Dorsolateral prefrontal cortex (tissue), 120 donors: ENCODE measurements at regions of chr13 and their contacts with region 1.

Region 1: GRCh38 chr13:30673669-30674521 is 56.2 kb downstream of the USPL1 start:
- DNase-seq: peak; percentile 74 to 90 (median 86)
- H3K4me3 ChIP-seq: peak overlapping the region; percentile 33 to 77 (median 61)
- H3K27ac ChIP-seq: peak overlapping the region; percentile 27 to 91 (median 83)
- H3K27me3 ChIP-seq: no peaks in the 10 kb centered on the region
- CTCF ChIP-seq: peak; percentile 32 to 94 (median 76)

Region 2: DNA sequence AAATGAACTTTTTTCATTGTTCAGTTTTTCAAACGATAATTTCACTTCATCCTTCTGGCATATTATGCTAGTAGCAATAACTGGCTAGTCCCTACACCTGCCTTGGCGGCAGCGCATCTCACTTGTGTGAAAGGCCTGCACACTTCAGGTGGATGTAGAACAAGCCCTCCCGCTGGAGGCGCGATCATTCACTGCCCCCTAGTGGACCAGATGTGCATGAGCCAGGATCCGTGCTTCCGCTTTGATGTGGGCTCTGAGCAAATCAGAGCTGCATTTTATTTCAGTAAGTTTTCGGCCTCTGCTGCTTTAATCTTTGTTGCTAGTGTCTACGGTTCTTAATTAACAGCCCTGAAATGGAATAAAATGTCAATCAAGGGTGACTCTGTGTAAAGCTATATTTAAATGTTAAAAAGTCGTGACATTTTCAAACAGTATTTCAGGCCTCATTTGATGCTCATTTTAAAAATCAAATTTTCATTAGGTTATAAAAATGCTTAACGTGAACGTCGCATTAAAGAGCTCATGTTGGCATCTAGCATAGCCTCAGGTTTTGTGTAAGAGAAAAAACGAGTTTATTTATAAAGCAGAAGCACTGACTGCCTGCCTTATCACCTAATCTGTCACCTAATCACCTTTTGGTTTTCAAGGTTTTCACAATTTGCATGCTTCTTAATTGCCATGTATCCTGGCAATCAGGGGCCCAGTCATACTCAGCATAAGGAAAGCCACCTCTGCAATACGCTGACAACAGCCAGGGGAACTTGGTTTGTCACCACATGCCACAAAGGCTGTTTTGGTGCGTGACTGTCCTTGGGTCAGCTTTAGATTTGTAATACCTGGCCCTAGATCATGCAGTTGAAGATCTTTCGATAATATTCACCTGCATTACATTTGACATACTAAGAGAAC is 370.7 kb after region 1 on chr13:
- intact Hi-C with region 1: loop called in 1 of 2 experiments (anchors 10 kb)
- DNase-seq: peak; percentile 70 to 88 (median 84)
- H3K4me3 ChIP-seq: no peak overlapping the region
- H3K27ac ChIP-seq: peak overlapping the region in 3 of 59 donors; percentile 14 to 38 (median 24)
- H3K27me3 ChIP-seq: peaks cover 0 to 5% (median 0%) of the 10 kb centered on the region in 45 donors
- CTCF ChIP-seq: peak; percentile 90 to 98 (median 96)